ENCODE measurements at regions of chr2 and their contacts with region 1.

Region 1: GRCh38 chr2:27771548-27772335 is at the start of gene MRPL33:
- DNase-seq: peak; percentile 96 to 99 (median 98)
- H3K4me3 ChIP-seq: peak within 1 kb of the TSS; percentile 49 to 90 (median 56)
- H3K27ac ChIP-seq: peak within 1 kb of the TSS; percentile 70 to 95 (median 92)
- H3K4me1 ChIP-seq: peaks cover 24 to 28% of the 10 kb centered on the region in 2 donors
- H3K27me3 ChIP-seq: no peaks in the 10 kb centered on the region
- CTCF ChIP-seq: no peak
- POLR2A ChIP-seq: peak; percentile 81 to 82
- total RNA-seq, gene MRPL33: 211 to 1,020 (median 479) TPM

Region 2: GRCh38 chr2:25982273-25982967 is 1789.3 kb before region 1 on chr2 and contains the start of gene KIF3C:
- intact Hi-C with region 1: no loop called
- DNase-seq: peak; percentile 52 to 84 (median 65)
- H3K4me3 ChIP-seq: peak within 1 kb of the TSS; percentile 44 to 79 (median 62)
- H3K27ac ChIP-seq: peak within 1 kb of the TSS in 3 of 5 donors; percentile 21 to 66 (median 66)
- H3K4me1 ChIP-seq: peaks cover 7 to 33% of the 10 kb centered on the region in 2 donors
- H3K27me3 ChIP-seq: no peaks in the 10 kb centered on the region
- CTCF ChIP-seq: no peak
- POLR2A ChIP-seq: peak in 1 of 2 donors; percentile 39
- total RNA-seq, gene KIF3C: 5.0 to 22.8 (median 10.8) TPM

Region 3: GRCh38 chr2:27890146-27890923 is 118.6 kb after region 1 on chr2 and contains the starts of genes BABAM2 and RBKS:
- intact Hi-C with region 1: loop called in 1 of 2 experiments (anchors 10 kb)
- DNase-seq: peak; percentile 88 to 96 (median 93)
- H3K4me3 ChIP-seq: peak within 1 kb of the TSS; percentile 28 to 91 (median 78)
- H3K27ac ChIP-seq: peak within 1 kb of the TSS; percentile 90 to 100 (median 98)
- H3K4me1 ChIP-seq: peaks cover 31 to 81% of the 10 kb centered on the region in 2 donors
- H3K27me3 ChIP-seq: no peaks in the 10 kb centered on the region
- CTCF ChIP-seq: peak in 1 of 6 experiments; percentile 3
- POLR2A ChIP-seq: peak; percentile 79 to 91
- total RNA-seq, gene BABAM2: 88.2 to 925 (median 373) TPM
- total RNA-seq, gene RBKS: 9.1 to 54.4 (median 25.9) TPM

Measured in adrenal gland (tissue), 19 donors.